ENCODE measurements at regions of chr1 and their contacts with region 1.

Region 1: GRCh38 chr1:156129706-156130581 is 15.4 kb downstream of the LMNA start:
- DNase-seq: peak; percentile 91 to 97 (median 97)
- H3K4me3 ChIP-seq: peak overlapping the region in 1 of 4 donors; percentile 15
- H3K27ac ChIP-seq: peak overlapping the region; percentile 74 to 99 (median 96)
- H3K4me1 ChIP-seq: peaks cover 52 to 57% of the 10 kb centered on the region in 2 donors
- H3K27me3 ChIP-seq: no peaks in the 10 kb centered on the region
- CTCF ChIP-seq: peak; percentile 81 to 99 (median 99)
- POLR2A ChIP-seq: peak in 1 of 2 donors; percentile 80

Region 2: GRCh38 chr1:156001682-156002171 is 128.2 kb before region 1 on chr1:
- intact Hi-C with region 1: no loop called
- DNase-seq: no peak
- H3K4me3 ChIP-seq: no peak overlapping the region
- H3K27ac ChIP-seq: peak overlapping the region in 1 of 5 donors; percentile 5
- H3K4me1 ChIP-seq: peaks cover 0 to 14% of the 10 kb centered on the region in 2 donors
- H3K27me3 ChIP-seq: no peaks in the 10 kb centered on the region
- CTCF ChIP-seq: peak in 1 of 6 experiments; percentile 14
- POLR2A ChIP-seq: no peak

Region 3: GRCh38 chr1:156096640-156097391 is 33.1 kb before region 1 on chr1:
- intact Hi-C with region 1: loop called (anchors 2 kb)
- DNase-seq: peak; percentile 89 to 98 (median 93)
- H3K4me3 ChIP-seq: no peak overlapping the region
- H3K27ac ChIP-seq: peak overlapping the region in 3 of 5 donors; percentile 32 to 71 (median 52)
- H3K4me1 ChIP-seq: peaks cover 16 to 29% of the 10 kb centered on the region in 2 donors
- H3K27me3 ChIP-seq: no peaks in the 10 kb centered on the region
- CTCF ChIP-seq: peak; percentile 78 to 99 (median 96)
- POLR2A ChIP-seq: no peak

Region 4: DNA sequence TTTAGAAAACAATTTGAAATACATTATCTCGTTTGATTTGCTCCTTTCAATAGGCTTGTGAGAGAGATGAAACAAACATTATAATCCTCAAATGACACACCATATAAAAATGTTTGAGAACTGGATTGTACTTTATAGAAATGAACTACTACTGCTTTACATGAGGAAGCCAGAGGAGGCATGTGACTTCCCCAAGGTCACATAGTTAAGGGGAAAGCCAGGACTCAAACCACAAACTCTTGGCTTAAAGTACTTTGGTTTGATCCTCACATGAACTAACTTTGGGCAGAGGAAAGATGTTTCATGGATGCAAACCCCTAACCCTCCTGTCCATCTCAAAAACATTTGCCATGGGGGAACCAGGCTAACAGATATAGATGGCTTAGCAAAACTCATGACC is 910.9 kb after region 1 on chr1:
- intact Hi-C with region 1: no loop called
- DNase-seq: peak in 2 of 7 donors; percentile 22 to 32
- H3K4me3 ChIP-seq: no peak overlapping the region
- H3K27ac ChIP-seq: no peak overlapping the region
- H3K4me1 ChIP-seq: peaks cover 44 to 65% of the 10 kb centered on the region in 2 donors
- H3K27me3 ChIP-seq: no peaks in the 10 kb centered on the region
- CTCF ChIP-seq: no peak
- POLR2A ChIP-seq: no peak